Sigmoid colon (tissue), 7 donors: ENCODE measurements at regions of chr9 and their contacts with region 1.

Region 1: DNA sequence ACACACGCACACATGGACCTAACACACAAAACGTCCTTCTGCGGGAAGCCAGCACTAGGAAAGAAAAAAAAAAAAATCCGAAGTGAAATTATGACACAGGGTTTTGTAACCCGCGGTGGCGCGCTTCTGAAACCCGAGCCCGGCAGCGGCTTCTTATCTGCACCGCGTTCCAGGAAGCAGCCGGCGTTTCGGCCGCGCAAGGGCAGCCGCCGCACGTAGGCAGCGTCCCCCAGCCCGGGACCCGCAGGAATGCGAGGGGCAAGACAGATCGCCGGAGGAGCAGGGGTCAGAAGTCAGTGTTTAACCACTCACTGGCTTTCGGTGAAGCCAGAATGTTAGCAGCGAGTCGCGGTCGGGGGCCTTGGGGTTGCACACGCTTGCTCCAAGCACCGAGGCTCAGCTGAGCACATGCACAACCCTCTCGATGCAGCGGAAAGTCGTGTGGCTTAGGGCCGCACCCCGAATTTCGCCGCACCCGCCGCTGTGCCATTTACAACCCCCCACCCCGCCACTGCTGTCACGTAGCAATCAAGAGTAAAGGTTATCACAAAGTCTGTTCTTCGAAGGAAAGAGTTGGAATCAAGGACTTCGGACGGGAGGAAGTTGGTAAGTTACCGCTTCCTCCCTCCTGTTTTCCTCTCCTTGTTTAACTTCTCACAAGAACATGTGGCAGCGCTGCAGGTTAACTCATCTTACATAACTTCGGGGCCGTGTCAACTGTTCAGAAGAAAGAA is 167.9 kb downstream of the AUH start:
- DNase-seq: peak; percentile 94
- H3K4me3 ChIP-seq: peak overlapping the region; percentile 30 to 52 (median 48)
- H3K27ac ChIP-seq: peak overlapping the region; percentile 94 to 99 (median 96)
- H3K4me1 ChIP-seq: peaks cover 0 to 63% (median 62%) of the 10 kb centered on the region in 4 donors
- H3K27me3 ChIP-seq: no peaks in the 10 kb centered on the region
- CTCF ChIP-seq: no peak
- EP300 ChIP-seq: peak in 2 of 4 donors; percentile 56 to 66
- POLR2A ChIP-seq: peak; percentile 41 to 46

Region 2: GRCh38 chr9:91036826-91037510 is 156.9 kb before region 1 on chr9:
- intact Hi-C with region 1: loop called (anchors 5 kb)
- DNase-seq: peak; percentile 93
- H3K4me3 ChIP-seq: no peak overlapping the region
- H3K27ac ChIP-seq: peak overlapping the region; percentile 23 to 67 (median 60)
- H3K4me1 ChIP-seq: peaks cover 0 to 20% (median 19%) of the 10 kb centered on the region in 4 donors
- H3K27me3 ChIP-seq: no peaks in the 10 kb centered on the region
- CTCF ChIP-seq: peak; percentile 55 to 80 (median 60)
- EP300 ChIP-seq: no peak
- POLR2A ChIP-seq: no peak

Region 3: GRCh38 chr9:91117959-91118703 is 75.7 kb before region 1 on chr9:
- intact Hi-C with region 1: loop called (anchors 5 kb)
- DNase-seq: peak; percentile 92
- H3K4me3 ChIP-seq: peak overlapping the region in 3 of 4 donors; percentile 24 to 38 (median 27)
- H3K27ac ChIP-seq: peak overlapping the region; percentile 67 to 75 (median 72)
- H3K4me1 ChIP-seq: peaks cover 0 to 35% (median 30%) of the 10 kb centered on the region in 4 donors
- H3K27me3 ChIP-seq: no peaks in the 10 kb centered on the region
- CTCF ChIP-seq: no peak
- EP300 ChIP-seq: peak in 1 of 4 donors; percentile 23
- POLR2A ChIP-seq: peak in 1 of 2 donors; percentile 34

Region 4: DNA sequence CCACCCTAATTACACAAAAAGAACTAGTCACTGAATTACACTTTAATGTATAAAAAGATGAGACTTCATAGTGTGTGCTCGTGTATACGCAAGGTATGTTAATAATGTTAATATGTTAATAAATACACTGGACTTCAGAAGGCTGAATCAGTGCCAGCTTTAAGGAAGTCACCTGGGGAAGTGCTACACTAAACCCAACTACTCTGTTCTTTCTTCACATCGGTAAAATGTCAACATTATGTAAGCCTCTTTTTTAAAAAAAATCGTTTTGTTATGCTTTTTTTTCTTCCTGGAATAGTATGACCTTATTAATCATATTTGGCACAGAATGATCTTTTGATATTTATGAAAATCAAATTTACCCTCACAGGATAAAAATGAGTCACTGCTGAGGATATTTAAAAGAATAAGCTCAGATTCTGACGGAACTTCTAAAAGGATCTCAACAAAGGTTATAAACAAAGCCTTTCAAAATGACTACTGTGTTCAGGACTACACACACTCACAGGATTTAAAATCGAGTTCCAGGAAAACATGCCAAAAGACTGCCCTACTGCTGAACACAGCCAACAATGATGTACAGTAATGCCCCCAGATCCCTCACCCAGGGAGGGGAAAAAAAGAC is 92.0 kb after region 1 on chr9:
- intact Hi-C with region 1: no loop called
- DNase-seq: no peak
- H3K4me3 ChIP-seq: no peak overlapping the region
- H3K27ac ChIP-seq: peak overlapping the region in 2 of 4 donors; percentile 11 to 26
- H3K4me1 ChIP-seq: peaks cover 0 to 13% (median 8%) of the 10 kb centered on the region in 4 donors
- H3K27me3 ChIP-seq: no peaks in the 10 kb centered on the region
- CTCF ChIP-seq: no peak
- EP300 ChIP-seq: no peak
- POLR2A ChIP-seq: no peak

Region 5: GRCh38 chr9:91301161-91301560 is 107.3 kb after region 1 on chr9:
- intact Hi-C with region 1: loop called (anchors 2 kb)
- DNase-seq: peak; percentile 79
- H3K4me3 ChIP-seq: no peak overlapping the region
- H3K27ac ChIP-seq: peak overlapping the region; percentile 69 to 86 (median 78)
- H3K4me1 ChIP-seq: peaks cover 0 to 63% (median 43%) of the 10 kb centered on the region in 4 donors
- H3K27me3 ChIP-seq: no peaks in the 10 kb centered on the region
- CTCF ChIP-seq: no peak
- EP300 ChIP-seq: peak in 1 of 4 donors; percentile 14
- POLR2A ChIP-seq: no peak

Region 6: DNA sequence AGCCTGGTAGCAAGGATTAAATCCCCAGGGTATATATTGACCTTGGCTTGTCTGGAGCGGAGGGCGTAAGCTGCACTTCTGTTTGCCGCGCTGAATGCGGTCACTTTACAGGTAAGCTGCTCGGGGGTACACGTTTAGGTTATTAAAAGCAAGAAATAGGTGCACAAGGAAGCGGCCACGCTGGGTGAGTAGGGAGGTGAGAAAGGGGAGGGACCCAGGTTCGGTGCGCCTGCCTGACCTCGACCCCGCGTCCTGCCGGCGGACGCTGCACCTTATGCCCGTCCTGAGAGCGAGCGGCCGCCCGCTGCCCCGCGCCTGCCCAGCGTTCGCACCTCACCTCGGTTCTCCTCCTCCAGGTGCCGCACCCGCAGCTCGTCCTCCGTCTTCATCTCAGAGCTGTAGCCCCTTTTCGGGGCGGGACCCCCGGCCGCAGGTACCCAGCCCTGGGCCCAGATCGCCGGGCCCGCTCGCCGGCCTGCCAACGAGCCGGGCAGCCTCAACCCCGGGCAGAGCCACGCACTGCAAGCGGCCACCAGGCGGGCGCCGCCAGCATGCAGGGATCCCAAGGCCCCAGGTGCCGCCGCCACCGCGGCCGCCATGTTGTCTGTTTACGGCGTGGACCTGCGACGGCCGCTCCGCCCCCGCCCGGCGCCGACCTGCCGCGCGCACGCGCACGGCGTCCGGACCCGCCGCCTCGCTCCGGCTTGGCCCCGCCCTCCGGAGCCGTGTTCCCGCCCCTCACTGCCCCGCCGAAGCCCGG is 167.6 kb after region 1 on chr9 and contains the start of gene AUH:
- intact Hi-C with region 1: loop called (anchors 2 kb)
- DNase-seq: peak; percentile 92
- H3K4me3 ChIP-seq: peak within 1 kb of the TSS; percentile 75 to 99 (median 98)
- H3K27ac ChIP-seq: peak within 1 kb of the TSS; percentile 89 to 90 (median 90)
- H3K4me1 ChIP-seq: peaks cover 0 to 36% (median 18%) of the 10 kb centered on the region in 4 donors
- H3K27me3 ChIP-seq: no peaks in the 10 kb centered on the region
- CTCF ChIP-seq: peak in 1 of 4 experiments; percentile 9
- EP300 ChIP-seq: no peak
- POLR2A ChIP-seq: no peak
- total RNA-seq, gene AUH: 27.1 to 36.4 (median 28.1) TPM

Region 7: DNA sequence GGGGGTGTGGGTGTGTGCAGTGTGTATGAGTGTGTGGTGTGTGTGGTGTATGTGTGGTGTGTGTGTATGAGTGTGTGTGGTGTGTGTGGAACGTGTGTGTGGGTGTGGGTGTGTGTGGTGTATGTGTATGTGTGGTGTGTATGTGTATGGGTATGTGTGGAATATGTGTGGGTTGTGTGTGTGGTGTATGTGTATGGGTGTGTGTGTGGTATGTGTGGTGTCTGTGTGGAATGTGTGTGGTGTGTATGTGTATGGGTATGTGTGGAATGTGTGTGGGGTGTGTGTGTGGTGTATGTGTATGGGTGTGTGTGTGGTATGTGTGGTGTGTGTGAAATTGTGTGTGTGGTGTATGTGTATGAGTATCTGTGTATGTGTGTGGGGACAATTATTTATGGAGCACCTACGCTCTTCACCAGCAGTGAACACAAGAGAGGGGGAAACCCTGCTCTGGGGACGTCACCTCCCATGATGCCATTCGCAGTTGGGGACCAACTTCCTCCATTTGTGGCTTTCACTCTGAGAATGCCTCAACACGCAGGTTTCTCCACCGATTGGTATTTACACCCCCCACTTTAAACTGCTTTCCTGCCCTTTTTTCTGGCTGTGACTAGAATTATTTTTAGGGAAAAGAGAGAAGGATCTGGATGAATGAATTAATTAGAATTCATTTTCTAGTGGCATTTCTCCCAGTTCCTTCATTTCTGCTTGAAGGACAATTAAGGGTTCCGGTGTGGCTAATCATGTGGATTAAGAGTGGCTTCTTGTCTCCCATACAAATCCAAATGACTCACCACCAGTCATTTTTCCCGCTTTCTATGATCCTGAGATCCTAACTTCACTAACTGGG is 518.2 kb after region 1 on chr9:
- intact Hi-C with region 1: loop called (anchors 5 kb)
- DNase-seq: no peak
- H3K4me3 ChIP-seq: no peak overlapping the region
- H3K27ac ChIP-seq: peak overlapping the region in 2 of 4 donors; percentile 11 to 47
- H3K4me1 ChIP-seq: peaks cover 0 to 11% (median 0%) of the 10 kb centered on the region in 4 donors
- H3K27me3 ChIP-seq: no peaks in the 10 kb centered on the region
- CTCF ChIP-seq: no peak
- EP300 ChIP-seq: no peak
- POLR2A ChIP-seq: no peak